Activated CD4-positive, alpha-beta memory T cell treated with anti-CD3 and anti-CD28 coated beads for 36 hours (primary cell): ENCODE measurements at regions of chr19 and their contacts with region 1.

Region 1: GRCh38 chr19:55476100-55476775 is at the start of gene ZNF628:
- DNase-seq: peak; percentile 99
- H3K4me3 Mint-ChIP-seq: peak within 1 kb of the TSS; percentile 88
- H3K27ac Mint-ChIP-seq: peak within 1 kb of the TSS; percentile 91
- H3K4me1 Mint-ChIP-seq: peaks cover 19% of the 10 kb centered on the region
- H3K27me3 Mint-ChIP-seq: no peaks in the 10 kb centered on the region
- total RNA-seq, gene ZNF628: 5.8 to 6.9 TPM

Region 2: GRCh38 chr19:55461259-55461973 is 14.8 kb before region 1 on chr19 and contains the start of gene ISOC2:
- CTCF ChIA-PET with region 1: interaction called, 48 read pairs
- POLR2A ChIA-PET with region 1: interaction called, 7 read pairs
- intact Hi-C with region 1: loop called (anchors 2 kb)
- DNase-seq: peak; percentile 100
- H3K4me3 Mint-ChIP-seq: peak within 1 kb of the TSS; percentile 91
- H3K27ac Mint-ChIP-seq: peak within 1 kb of the TSS; percentile 84
- H3K4me1 Mint-ChIP-seq: peaks cover 21% of the 10 kb centered on the region
- H3K27me3 Mint-ChIP-seq: peaks cover 2% of the 10 kb centered on the region
- total RNA-seq, gene ISOC2: 24.6 to 24.7 TPM

Region 3: GRCh38 chr19:55552620-55553019 is 76.4 kb after region 1 on chr19:
- CTCF ChIA-PET with region 1: no interaction called
- POLR2A ChIA-PET with region 1: no interaction called
- intact Hi-C with region 1: no loop called
- DNase-seq: no peak
- H3K4me3 Mint-ChIP-seq: no peak overlapping the region
- H3K27ac Mint-ChIP-seq: no peak overlapping the region
- H3K4me1 Mint-ChIP-seq: no peaks in the 10 kb centered on the region
- H3K27me3 Mint-ChIP-seq: peaks cover 6% of the 10 kb centered on the region

Region 4: DNA sequence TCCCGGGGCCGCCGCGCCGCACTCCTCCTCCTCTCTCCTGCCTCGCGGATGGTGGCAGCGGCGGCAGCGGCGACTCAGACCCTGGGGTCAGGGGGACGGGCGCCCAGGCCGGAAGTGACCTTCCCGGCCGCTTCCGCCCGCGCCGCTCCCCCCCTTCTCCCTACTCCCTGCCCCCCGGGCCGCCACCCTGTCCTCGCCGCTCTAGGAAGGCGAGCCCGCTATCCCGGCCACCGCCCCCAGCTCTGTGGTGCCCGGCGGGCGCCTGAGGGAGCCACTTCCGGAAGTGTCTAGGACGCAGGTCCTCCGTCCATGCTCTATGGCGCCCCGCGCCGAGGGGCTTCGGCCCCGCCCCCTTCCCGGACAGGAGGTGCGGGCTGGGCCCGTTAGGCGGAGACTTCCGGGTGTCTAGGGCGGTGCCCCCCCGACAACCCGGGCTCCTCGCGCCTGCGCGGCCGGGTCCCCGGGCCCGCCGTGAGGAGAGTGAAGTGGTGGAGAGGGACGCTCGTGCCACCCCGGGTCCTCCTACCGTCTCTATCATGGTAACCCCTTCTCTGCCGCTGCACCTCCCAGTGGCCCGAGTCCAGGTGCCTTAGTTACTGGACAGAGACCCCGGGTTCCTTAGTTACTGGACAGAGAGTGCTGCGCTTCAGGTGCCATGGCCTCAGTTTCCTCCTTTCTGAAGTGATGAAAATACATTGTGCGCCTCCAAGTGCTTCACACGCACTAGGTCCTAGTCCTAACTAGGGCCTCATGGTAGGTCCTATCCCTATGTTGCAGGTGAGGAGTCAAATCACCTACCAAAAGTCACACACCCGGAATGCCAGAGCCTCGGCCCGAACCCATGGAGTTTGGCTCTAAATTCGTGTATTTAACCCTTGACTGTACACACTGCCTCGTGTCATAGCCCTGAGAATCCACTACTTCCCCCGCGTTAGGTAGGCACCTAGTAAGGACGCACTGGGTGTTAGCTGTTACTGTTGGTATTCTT is 645.2 kb after region 1 on chr19 and contains the start of gene ZNF787:
- CTCF ChIA-PET with region 1: no interaction called
- POLR2A ChIA-PET with region 1: no interaction called
- intact Hi-C with region 1: loop called (anchors 2 kb)
- DNase-seq: peak; percentile 97
- H3K4me3 Mint-ChIP-seq: peak within 1 kb of the TSS; percentile 85
- H3K27ac Mint-ChIP-seq: peak within 1 kb of the TSS; percentile 91
- H3K4me1 Mint-ChIP-seq: peaks cover 39% of the 10 kb centered on the region
- H3K27me3 Mint-ChIP-seq: no peaks in the 10 kb centered on the region
- total RNA-seq, gene ZNF787: 25.3 to 25.5 TPM